Panc1 (cell line): ENCODE measurements at regions of chr20 and their contacts with region 1.

Region 1: GRCh38 chr20:62900692-62901584 is 25.4 kb downstream of the DIDO1 start:
- DNase-seq: no peak
- ATAC-seq: peak; percentile 65
- H3K4me3 ChIP-seq: no peak overlapping the region
- H3K27ac ChIP-seq: no peak overlapping the region
- H3K4me1 ChIP-seq: peaks cover 24% of the 10 kb centered on the region
- H3K27me3 ChIP-seq: no peaks in the 10 kb centered on the region
- CTCF ChIP-seq: no peak; the same call in 1 of the 2 replicates

Region 2: GRCh38 chr20:62916703-62917476 is 16.0 kb after region 1 on chr20:
- CTCF ChIA-PET with region 1: interaction called, 6 read pairs
- POLR2A ChIA-PET with region 1: interaction called, 13 read pairs
- in situ Hi-C with region 1: no loop called
- intact Hi-C with region 1: no loop called
- DNase-seq: no peak
- ATAC-seq: no peak
- H3K4me3 ChIP-seq: no peak overlapping the region
- H3K27ac ChIP-seq: no peak overlapping the region
- H3K4me1 ChIP-seq: peaks cover 80% of the 10 kb centered on the region
- H3K27me3 ChIP-seq: no peaks in the 10 kb centered on the region
- CTCF ChIP-seq: no peak

Region 3: GRCh38 chr20:63272584-63273579 is 371.9 kb after region 1 on chr20 and contains the start of gene ARFGAP1:
- CTCF ChIA-PET with region 1: no interaction called
- POLR2A ChIA-PET with region 1: interaction called, 10 read pairs
- in situ Hi-C with region 1: no loop called
- intact Hi-C with region 1: no loop called
- DNase-seq: no peak
- ATAC-seq: peak; percentile 97
- H3K4me3 ChIP-seq: peak within 1 kb of the TSS; percentile 95 to 99
- H3K27ac ChIP-seq: peak within 1 kb of the TSS; percentile 82
- H3K4me1 ChIP-seq: peaks cover 15% of the 10 kb centered on the region
- H3K27me3 ChIP-seq: no peaks in the 10 kb centered on the region
- CTCF ChIP-seq: no peak
- total RNA-seq, gene ARFGAP1: 110 TPM